AG04449 (cell line): ENCODE measurements at regions of chr10 and their contacts with region 1.

Region 1: GRCh38 chr10:28393966-28394568 is 91.2 kb upstream of the MPP7 start:
- DNase-seq: no peak
- H3K4me3 ChIP-seq: no peak overlapping the region
- CTCF ChIP-seq: peak; percentile 83

Region 2: GRCh38 chr10:27999005-27999305 is 395.1 kb before region 1 on chr10 and contains the start of gene ODAD2:
- CTCF ChIA-PET with region 1: no interaction called
- POLR2A ChIA-PET with region 1: no interaction called
- DNase-seq: no peak
- H3K4me3 ChIP-seq: peak within 1 kb of the TSS; percentile 67
- CTCF ChIP-seq: no peak

Region 3: GRCh38 chr10:28250782-28251181 is 143.3 kb before region 1 on chr10:
- CTCF ChIA-PET with region 1: interaction called, 87 read pairs
- POLR2A ChIA-PET with region 1: no interaction called
- DNase-seq: no peak
- H3K4me3 ChIP-seq: no peak overlapping the region
- CTCF ChIP-seq: peak; percentile 15

Region 4: DNA sequence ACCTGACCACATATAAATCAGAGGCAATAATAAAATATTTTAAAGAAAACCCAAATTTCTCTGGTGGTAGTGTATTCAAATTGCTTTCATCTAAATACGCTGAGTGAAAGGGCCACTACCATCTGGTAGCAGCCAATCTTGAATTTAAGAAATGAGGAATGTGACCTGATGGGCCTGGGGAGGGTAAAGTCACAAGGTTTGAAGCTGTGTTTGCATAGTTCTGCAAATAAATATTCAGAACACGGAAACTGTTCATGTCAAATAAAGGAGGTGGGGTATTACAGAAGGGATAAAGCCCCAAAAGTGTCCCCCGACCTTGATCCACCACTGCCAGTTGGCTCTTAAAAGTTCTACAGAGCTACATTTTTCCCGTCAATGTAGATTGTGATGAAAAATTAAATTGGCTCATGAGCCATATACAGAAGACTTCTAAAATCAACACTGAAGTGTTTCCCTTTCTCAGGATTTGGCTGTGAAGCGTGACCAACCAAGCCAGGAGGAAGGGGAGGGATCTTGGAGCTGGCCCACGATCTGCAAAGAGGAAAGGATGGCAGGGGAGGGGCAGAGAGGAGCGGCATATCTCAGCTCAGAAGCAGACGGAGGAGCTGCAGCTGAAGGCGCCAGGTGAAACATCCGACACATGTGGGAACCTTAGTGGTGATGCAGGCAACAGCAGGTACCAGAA is 130.8 kb before region 1 on chr10:
- CTCF ChIA-PET with region 1: interaction called, 13 read pairs
- POLR2A ChIA-PET with region 1: no interaction called
- DNase-seq: no peak
- H3K4me3 ChIP-seq: no peak overlapping the region
- CTCF ChIP-seq: no peak

Region 5: DNA sequence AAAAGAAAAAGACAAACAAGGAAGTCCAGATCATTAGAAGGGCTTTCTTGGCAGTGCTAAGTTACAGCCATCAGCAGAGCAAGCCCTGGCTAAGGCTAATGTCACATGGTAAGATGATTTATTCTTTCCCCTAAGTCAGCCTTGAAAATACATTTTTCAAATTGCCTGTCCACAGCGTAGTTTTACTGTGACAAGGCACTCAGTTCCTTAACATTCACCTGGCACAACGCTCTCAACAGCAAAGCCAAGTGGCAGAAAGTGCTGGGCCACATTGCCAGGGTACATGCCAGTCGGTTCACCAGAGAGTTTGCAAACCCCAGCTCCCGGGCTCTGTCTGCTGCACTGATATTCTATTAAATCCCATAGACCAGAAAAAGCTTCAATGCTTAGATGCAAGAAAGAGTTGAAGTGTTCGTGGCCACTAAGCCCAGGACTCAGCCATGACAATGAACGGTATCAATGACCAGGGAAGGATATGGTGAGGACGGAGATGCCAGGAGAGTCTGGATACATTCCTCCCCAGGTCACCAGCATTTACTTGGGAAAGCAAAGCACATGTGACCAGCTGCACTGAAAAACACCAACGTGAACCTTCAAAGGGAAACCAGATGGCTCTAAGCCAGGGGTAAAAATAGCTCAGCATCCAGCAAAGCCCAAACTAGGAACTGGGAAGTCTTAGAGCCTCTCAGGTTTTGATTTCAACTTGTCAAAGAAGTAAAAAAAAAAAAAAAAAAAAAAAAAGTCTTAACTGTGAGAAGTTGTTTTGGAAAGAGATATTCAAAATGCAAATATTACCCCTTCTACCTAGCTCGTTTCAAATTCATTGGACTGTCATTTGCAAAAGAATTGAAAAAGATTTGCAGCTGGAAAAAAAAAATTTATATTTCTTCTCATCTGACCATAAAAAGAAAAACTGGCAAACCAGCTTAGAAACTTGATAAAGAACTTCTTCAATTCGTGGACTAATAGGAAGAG is 67.3 kb before region 1 on chr10:
- CTCF ChIA-PET with region 1: interaction called, 10 read pairs
- POLR2A ChIA-PET with region 1: no interaction called
- DNase-seq: no peak
- H3K4me3 ChIP-seq: no peak overlapping the region
- CTCF ChIP-seq: no peak

Region 6: DNA sequence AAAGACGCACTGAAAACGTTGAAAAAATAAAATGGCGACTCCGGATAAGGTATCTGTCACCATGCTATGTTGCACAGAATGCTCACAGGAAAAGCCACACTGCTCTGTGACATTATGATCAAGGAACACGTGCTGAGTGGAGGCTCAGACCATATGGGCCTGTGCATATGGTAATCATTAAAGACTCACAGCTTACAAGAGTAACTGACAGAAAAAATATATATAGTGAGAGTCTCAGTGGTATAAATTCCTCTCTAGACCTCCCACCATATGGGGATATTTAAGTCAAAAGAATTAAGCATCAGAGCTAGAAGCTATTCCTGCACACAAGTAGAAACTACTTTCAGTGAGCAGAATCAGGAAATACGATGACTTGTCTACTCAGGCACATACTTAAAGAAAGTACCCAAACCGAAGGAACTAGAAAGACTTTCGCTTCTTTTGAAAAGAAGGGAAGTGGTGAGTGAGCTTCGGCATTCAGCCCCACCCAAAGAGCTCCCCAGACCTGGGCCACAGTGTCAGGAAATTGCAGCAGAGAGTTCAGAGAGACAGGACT is 26.1 kb before region 1 on chr10:
- CTCF ChIA-PET with region 1: interaction called, 11 read pairs
- POLR2A ChIA-PET with region 1: no interaction called
- DNase-seq: no peak
- H3K4me3 ChIP-seq: peak overlapping the region; percentile 12; the same call in 1 of the 2 replicates
- CTCF ChIP-seq: no peak

Region 7: DNA sequence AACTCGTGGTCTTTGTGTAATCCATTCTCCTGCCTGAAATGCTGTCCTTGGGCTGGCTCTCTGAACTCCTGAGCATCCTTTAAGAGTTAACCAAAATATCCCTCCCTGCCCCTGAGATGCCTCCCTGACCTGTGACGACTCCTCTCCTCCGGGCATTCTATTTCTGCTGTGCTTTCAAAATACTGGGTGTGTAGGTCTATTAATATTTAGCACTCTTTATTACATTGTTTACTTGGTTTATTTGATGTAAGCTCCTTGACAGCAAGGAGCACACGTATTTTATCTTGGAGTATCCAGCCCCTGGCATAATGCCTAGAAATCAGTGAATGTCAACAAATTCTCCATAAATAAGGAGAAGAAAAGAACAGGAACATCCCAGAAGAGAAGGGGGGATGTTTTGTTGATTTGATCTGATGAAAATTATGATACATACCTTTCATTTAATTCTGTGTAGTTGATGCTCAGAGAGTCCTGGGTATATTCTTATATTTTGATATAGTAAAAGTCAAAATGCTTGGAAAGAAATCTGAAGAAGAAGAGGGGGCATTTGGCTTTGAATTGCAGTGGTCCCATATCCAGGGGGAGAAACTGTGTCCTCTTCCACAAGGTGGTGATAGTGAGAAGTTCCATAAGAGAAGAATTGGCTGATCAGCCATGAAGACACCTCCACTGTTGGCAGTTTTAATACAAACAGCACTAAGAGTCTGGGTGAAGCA is 16.5 kb after region 1 on chr10:
- CTCF ChIA-PET with region 1: interaction called, 11 read pairs
- POLR2A ChIA-PET with region 1: no interaction called
- DNase-seq: no peak
- H3K4me3 ChIP-seq: no peak overlapping the region
- CTCF ChIP-seq: no peak